CD14-positive monocyte (primary cell): ENCODE measurements at regions of chr11 and their contacts with region 1.

Region 1: DNA sequence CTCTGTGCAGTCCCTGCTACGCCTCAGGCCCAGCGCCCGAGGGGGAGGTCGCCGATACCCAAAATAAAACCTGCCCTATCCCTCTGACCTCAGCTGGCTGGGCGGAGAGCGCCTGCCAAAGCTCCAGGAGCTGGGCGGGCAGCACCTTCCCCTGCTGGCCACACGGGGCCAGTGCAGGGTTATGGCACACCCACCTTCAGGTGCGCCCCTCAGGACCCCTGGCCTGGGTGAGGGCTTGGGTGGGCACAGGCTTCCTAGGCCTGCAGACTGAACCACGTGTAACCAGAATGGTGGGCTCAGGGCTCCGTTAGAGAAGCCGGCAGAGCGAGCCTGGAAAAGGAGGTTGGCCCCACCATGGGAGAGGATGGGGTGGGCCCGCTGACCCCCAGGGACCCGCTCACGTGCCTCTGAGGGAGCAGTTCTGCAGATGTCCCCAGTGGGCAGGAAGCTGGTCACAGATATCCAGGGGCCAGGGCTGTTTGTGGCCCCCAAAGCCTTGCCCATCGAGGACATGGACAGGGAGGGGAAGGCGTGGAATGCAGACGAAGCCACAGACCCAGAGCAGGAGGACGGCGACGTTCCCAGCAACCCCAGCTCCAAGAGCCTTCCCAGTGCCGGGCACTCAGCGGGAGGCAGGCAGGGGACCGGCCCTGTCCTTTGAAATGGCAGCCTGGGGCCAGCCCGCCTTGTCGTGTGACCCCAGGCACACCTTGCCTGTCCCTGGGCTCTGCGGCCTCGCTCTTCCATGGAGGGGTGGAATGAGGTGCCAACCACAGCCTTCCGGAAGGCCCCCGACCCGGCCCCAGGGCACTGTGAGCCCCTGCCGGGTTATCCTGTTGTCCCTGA is 1.6 kb upstream of the TNNT3 start:
- DNase-seq: no peak
- H3K4me3 ChIP-seq: no peak overlapping the region
- H3K4me3 Mint-ChIP-seq: no peak overlapping the region
- H3K27ac ChIP-seq: no peak overlapping the region
- H3K27ac Mint-ChIP-seq: no peak overlapping the region
- H3K4me1 ChIP-seq: peaks cover 0 to 2% of the 10 kb centered on the region in 2 donors
- H3K4me1 Mint-ChIP-seq: peaks cover 6% of the 10 kb centered on the region
- H3K27me3 ChIP-seq: no peaks in the 10 kb centered on the region
- H3K27me3 Mint-ChIP-seq: peaks cover 5 to 8% (median 6%) of the 10 kb centered on the region in 3 donors
- CTCF ChIP-seq: peak; percentile 88

Region 2: DNA sequence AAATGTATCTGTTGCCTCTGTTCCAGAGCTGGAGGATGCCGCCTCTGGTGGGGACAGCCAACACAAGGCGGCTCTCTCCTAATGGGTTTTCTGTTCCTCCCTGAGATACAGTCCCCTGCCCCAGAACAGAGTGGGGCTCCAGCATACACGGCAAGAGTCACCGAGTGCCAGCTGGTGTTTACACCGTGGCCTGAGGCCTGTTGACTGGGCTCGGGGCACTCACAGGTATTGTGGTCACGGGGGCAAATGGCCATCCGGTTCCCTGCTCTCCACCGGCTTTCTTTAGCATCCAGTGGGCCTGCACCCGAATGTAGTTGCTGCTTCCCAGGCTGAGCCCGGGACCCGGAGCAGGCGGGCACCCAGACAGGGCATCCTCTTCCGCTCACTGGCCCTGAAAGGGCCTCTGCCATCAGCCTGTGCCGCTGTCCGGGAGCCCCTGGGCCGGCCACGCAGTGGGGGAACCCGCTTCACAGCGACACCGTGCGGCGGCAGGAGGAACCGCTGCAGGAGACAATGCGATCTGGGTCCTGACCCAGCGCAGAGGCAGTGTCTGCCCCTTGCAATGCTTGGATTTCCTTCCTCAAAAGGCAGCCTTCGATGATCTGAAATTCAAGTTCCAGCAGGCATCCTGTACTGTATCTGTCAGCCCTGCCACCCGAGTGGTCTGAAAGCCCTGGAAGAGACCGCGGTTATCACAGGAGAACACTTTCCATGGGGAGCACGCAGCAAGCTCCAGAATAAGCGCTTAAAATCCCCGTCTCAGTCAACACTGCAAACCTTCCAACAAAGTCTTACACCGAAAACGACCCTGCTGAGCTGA is 289.2 kb before region 1 on chr11:
- intact Hi-C with region 1: no loop called
- DNase-seq: peak; percentile 9 to 36 (median 14)
- H3K4me3 ChIP-seq: no peak overlapping the region
- H3K4me3 Mint-ChIP-seq: peak overlapping the region in 1 of 2 donors; percentile 37
- H3K27ac ChIP-seq: no peak overlapping the region
- H3K27ac Mint-ChIP-seq: peak overlapping the region in 1 of 7 donors; percentile 39
- H3K4me1 ChIP-seq: no peaks in the 10 kb centered on the region
- H3K4me1 Mint-ChIP-seq: peaks cover 3% of the 10 kb centered on the region
- H3K27me3 ChIP-seq: peaks cover 0 to 10% of the 10 kb centered on the region in 2 donors
- H3K27me3 Mint-ChIP-seq: peaks cover 10 to 47% (median 15%) of the 10 kb centered on the region in 3 donors
- CTCF ChIP-seq: peak; percentile 92

Region 3: GRCh38 chr11:1694064-1694845 is 223.6 kb before region 1 on chr11:
- intact Hi-C with region 1: loop called in 1 of 2 experiments (anchors 5 kb)
- DNase-seq: peak; percentile 79 to 84 (median 81)
- H3K4me3 ChIP-seq: peak overlapping the region in 1 of 3 experiments; percentile 57
- H3K4me3 Mint-ChIP-seq: peak overlapping the region in 1 of 2 donors; percentile 78
- H3K27ac ChIP-seq: no peak overlapping the region
- H3K27ac Mint-ChIP-seq: no peak overlapping the region
- H3K4me1 ChIP-seq: peaks cover 10 to 14% of the 10 kb centered on the region in 2 donors
- H3K4me1 Mint-ChIP-seq: peaks cover 5% of the 10 kb centered on the region
- H3K27me3 ChIP-seq: peaks cover 0 to 43% of the 10 kb centered on the region in 2 donors
- H3K27me3 Mint-ChIP-seq: peaks cover 37 to 67% (median 44%) of the 10 kb centered on the region in 3 donors
- CTCF ChIP-seq: peak; percentile 67

Region 4: DNA sequence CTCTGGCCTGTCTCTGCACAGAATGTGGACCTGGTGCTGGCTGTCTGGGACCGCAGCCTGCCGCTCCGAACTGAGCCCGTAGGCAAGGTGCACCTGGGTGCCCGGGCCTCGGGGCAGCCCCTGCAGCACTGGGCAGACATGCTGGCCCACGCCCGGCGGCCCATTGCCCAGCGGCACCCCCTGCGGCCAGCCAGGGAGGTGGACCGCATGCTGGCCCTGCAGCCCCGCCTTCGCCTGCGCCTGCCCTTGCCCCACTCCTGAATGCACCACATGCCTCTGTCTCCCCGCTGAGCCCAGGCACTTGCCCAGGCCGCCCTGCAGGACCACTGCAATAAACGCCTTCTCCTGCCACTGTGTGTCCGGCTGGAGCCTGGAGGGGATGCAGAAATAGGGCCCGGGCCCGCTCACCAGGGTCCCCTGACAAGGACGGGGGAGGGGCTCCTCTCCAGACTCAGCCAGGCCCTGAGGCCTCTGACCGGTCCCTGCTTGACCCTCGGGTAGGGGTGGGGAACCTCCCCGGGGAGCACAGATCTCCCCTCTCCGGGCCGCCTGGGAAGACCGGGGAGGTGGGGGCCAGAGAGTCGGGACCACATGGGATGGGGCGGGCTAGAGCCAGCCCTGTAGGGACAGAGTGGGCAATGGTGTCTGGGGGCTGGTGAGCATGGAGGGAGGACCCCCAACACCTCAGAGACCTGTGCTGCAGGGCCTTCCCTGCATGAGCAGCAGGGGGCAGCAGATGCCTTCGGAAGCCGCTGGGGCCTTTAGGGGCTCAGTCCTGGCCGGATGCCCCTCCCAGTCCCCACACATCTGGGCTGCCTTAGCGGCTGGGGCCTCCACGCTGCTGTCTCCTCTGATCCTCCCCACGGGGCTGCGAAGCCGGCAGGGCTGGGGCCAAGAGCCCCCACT is 80.5 kb before region 1 on chr11:
- intact Hi-C with region 1: loop called (anchors 5 to 10 kb)
- DNase-seq: peak; percentile 62 to 67 (median 64)
- H3K4me3 ChIP-seq: no peak overlapping the region
- H3K4me3 Mint-ChIP-seq: no peak overlapping the region
- H3K27ac ChIP-seq: no peak overlapping the region
- H3K27ac Mint-ChIP-seq: peak overlapping the region in 2 of 7 donors; percentile 30 to 60
- H3K4me1 ChIP-seq: peaks cover 56 to 60% of the 10 kb centered on the region in 2 donors
- H3K4me1 Mint-ChIP-seq: peaks cover 33% of the 10 kb centered on the region
- H3K27me3 ChIP-seq: peaks cover 0 to 10% of the 10 kb centered on the region in 2 donors
- H3K27me3 Mint-ChIP-seq: peaks cover 11 to 29% (median 12%) of the 10 kb centered on the region in 3 donors
- CTCF ChIP-seq: peak; percentile 99

Region 5: DNA sequence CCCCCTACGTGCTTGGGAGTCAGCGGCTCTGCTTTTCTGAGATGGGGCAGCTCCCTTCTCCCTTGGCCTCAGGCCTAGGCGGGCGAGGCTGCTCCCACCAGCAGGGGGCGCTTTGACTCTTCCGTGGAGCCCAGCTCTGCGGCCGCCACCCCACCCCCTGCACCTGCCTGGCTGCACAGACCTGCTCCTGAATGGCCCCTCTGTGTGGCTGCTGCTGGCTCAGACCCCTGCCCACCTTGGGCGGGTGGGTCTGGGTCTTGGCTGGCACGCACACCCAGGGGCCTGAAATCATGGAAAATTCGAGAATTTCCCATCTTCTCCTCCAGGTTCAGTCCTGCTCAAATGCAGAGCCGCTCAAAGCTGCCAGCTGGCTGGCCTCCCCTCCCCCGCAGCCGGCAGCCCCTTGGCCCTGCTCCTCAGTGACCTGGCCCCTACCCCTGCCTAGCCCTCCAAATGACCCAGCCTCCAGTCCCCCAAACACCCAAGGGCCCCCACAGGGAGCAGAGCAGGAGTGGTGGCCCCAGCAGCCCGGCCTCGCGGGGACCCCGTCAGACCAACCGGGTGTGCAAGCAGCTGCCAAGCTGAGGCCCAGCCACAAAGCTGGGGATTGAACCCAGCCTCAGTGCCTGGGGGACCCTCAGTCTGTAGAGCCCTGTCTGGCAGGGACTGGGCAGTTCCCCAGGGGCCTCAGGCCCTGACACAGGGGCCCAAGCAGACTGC is 35.2 kb before region 1 on chr11:
- intact Hi-C with region 1: loop called in 1 of 2 experiments (anchors 5 kb)
- DNase-seq: peak; percentile 51 to 66 (median 64)
- H3K4me3 ChIP-seq: no peak overlapping the region
- H3K4me3 Mint-ChIP-seq: no peak overlapping the region
- H3K27ac ChIP-seq: peak overlapping the region in 1 of 2 donors; percentile 26
- H3K27ac Mint-ChIP-seq: no peak overlapping the region
- H3K4me1 ChIP-seq: peaks cover 34 to 40% of the 10 kb centered on the region in 2 donors
- H3K4me1 Mint-ChIP-seq: peaks cover 33% of the 10 kb centered on the region
- H3K27me3 ChIP-seq: peaks cover 0 to 4% of the 10 kb centered on the region in 2 donors
- H3K27me3 Mint-ChIP-seq: peaks cover 4 to 12% (median 5%) of the 10 kb centered on the region in 3 donors
- CTCF ChIP-seq: peak; percentile 91

Region 6: GRCh38 chr11:1896923-1897322 is 21.0 kb before region 1 on chr11:
- intact Hi-C with region 1: loop called (anchors 1 kb)
- DNase-seq: peak in 2 of 3 donors; percentile 33 to 39
- H3K4me3 ChIP-seq: peak overlapping the region; percentile 25 to 80 (median 49)
- H3K4me3 Mint-ChIP-seq: peak overlapping the region; percentile 88 to 95
- H3K27ac ChIP-seq: peak overlapping the region in 1 of 2 donors; percentile 59
- H3K27ac Mint-ChIP-seq: peak overlapping the region; percentile 47 to 87 (median 77)
- H3K4me1 ChIP-seq: peaks cover 17 to 19% of the 10 kb centered on the region in 2 donors
- H3K4me1 Mint-ChIP-seq: peaks cover 18% of the 10 kb centered on the region
- H3K27me3 ChIP-seq: no peaks in the 10 kb centered on the region
- H3K27me3 Mint-ChIP-seq: peaks cover 2 to 3% (median 2%) of the 10 kb centered on the region in 3 donors
- CTCF ChIP-seq: no peak

Region 7: DNA sequence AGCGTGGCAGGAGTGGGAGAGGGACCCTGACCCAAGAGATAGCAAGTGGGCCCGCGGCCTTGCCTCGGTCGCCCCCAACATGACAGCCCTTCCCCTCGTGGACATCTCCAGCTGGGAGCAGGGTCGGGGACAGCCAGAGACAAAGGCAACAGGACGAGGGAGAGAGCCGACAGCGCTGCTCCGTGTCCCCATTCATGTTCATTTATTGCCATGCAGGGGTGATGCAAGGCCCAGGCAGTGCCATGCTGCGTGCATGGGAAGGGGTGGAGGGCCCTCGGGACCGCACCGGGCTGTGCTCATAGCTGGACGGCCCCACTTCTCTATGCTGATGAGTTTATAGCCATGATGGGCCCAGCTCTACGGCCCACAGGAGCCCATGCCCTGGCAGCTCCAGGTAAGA is 41.9 kb after region 1 on chr11:
- intact Hi-C with region 1: no loop called
- DNase-seq: no peak
- H3K4me3 ChIP-seq: no peak overlapping the region
- H3K4me3 Mint-ChIP-seq: no peak overlapping the region
- H3K27ac ChIP-seq: no peak overlapping the region
- H3K27ac Mint-ChIP-seq: no peak overlapping the region
- H3K4me1 ChIP-seq: no peaks in the 10 kb centered on the region
- H3K4me1 Mint-ChIP-seq: no peaks in the 10 kb centered on the region
- H3K27me3 ChIP-seq: no peaks in the 10 kb centered on the region
- H3K27me3 Mint-ChIP-seq: no peaks in the 10 kb centered on the region
- CTCF ChIP-seq: no peak

Region 8: GRCh38 chr11:2249189-2249916 is 331.5 kb after region 1 on chr11:
- intact Hi-C with region 1: no loop called
- DNase-seq: no peak
- H3K4me3 ChIP-seq: no peak overlapping the region
- H3K4me3 Mint-ChIP-seq: no peak overlapping the region
- H3K27ac ChIP-seq: no peak overlapping the region
- H3K27ac Mint-ChIP-seq: no peak overlapping the region
- H3K4me1 ChIP-seq: no peaks in the 10 kb centered on the region
- H3K4me1 Mint-ChIP-seq: no peaks in the 10 kb centered on the region
- H3K27me3 ChIP-seq: peaks cover 0 to 2% of the 10 kb centered on the region in 2 donors
- H3K27me3 Mint-ChIP-seq: peaks cover 5 to 15% (median 14%) of the 10 kb centered on the region in 3 donors
- CTCF ChIP-seq: no peak

Region 9: GRCh38 chr11:2325719-2326118 is 407.8 kb after region 1 on chr11:
- intact Hi-C with region 1: no loop called
- DNase-seq: no peak
- H3K4me3 ChIP-seq: no peak overlapping the region
- H3K4me3 Mint-ChIP-seq: peak overlapping the region in 1 of 2 donors; percentile 28
- H3K27ac ChIP-seq: no peak overlapping the region
- H3K27ac Mint-ChIP-seq: no peak overlapping the region
- H3K4me1 ChIP-seq: no peaks in the 10 kb centered on the region
- H3K4me1 Mint-ChIP-seq: peaks cover 4% of the 10 kb centered on the region
- H3K27me3 ChIP-seq: peaks cover 0 to 20% of the 10 kb centered on the region in 2 donors
- H3K27me3 Mint-ChIP-seq: peaks cover 34 to 73% (median 46%) of the 10 kb centered on the region in 3 donors
- CTCF ChIP-seq: no peak